B cell (primary cell): ENCODE measurements at regions of chr22 and their contacts with region 1.

Region 1: DNA sequence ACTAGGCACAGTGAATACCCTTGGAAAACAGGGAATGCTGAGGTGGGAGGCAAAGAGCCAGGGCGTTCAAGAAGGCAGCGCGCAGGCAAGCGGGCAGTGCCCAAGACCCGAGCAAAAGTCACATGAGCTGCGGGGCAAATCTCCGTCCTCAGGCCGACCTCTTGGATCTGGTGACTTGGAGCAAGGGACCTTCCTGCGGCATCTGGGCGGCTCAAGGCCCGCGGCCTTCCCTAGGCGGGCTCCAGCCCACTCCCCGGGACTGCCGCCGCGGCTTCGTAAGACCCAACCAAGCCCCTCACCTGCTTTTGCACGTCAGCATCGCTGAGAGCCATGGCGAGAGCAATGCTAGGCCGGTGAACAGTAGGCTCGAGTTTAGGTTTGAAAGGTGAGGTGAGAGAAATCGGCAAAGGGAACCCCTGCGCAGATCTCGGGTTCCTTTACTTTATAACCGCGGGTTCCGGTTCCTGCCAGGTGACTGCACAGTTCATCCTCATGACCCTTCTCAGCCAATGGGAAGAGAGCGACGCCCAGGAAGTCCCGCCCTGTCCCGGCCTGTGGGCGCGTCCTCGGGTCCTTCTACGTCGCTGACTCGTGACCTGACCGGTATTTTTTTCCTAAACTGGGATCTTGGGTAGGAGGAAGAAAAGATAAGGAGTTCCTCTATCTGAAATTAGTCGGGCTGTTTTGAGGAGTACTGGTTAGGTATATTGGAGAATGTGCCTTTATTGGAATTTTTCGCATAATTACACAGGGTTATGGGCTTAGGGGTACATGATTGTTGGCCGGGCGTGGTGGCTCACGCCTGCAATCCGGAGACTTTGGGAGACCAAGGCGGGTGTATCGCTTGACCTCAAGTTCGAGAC is at the start of gene ATP6V1E1:
- DNase-seq: peak; percentile 97
- ATAC-seq: peak; percentile 100
- H3K4me3 ChIP-seq: peak within 1 kb of the TSS; percentile 93 to 98 (median 96)
- H3K4me3 Mint-ChIP-seq: peak within 1 kb of the TSS; percentile 96
- H3K27ac ChIP-seq: peak within 1 kb of the TSS; percentile 86 to 97
- H3K27ac Mint-ChIP-seq: peak within 1 kb of the TSS; percentile 98
- H3K4me1 ChIP-seq: peaks cover 16 to 21% of the 10 kb centered on the region in 2 donors
- H3K4me1 Mint-ChIP-seq: peaks cover 27% of the 10 kb centered on the region
- H3K27me3 ChIP-seq: no peaks in the 10 kb centered on the region
- H3K27me3 Mint-ChIP-seq: no peaks in the 10 kb centered on the region
- CTCF ChIP-seq: no peak
- total RNA-seq, gene ATP6V1E1: 82.6 and 82.9 TPM in 2 replicates

Region 2: DNA sequence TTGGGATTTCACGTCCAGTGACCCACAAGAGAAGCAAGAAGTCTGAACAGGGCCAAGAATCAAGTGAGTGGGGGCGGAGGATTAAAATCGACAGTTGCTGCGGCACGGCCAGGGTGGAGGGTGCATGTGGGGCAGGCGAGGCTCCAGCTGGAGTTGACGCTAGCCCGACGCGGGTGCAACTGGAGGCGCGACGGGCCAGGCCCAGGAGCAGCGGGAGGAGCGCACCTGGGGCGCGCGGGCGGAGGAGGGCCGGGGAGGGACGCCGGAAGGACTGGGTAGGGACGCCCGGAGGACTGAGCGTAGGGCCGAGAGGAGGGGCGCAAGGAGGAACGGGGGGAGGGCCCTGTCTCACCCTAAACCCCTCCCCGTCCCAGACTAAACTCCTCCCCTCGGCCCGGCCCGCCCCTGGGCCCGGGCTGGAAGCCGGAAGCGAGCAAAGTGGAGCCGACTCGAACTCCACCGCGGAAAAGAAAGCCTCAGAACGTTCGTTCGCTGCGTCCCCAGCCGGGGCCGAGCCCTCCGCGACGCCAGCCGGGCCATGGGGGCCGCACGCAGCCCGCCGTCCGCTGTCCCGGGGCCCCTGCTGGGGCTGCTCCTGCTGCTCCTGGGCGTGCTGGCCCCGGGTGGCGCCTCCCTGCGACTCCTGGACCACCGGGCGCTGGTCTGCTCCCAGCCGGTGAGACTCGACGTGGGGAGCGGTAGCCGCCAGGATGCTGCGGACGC is 543.8 kb before region 1 on chr22 and contains the start of gene IL17RA:
- CTCF ChIA-PET with region 1: no interaction called
- POLR2A ChIA-PET with region 1: no interaction called
- intact Hi-C with region 1: loop called (anchors 10 kb)
- DNase-seq: peak; percentile 93
- ATAC-seq: peak; percentile 99
- H3K4me3 ChIP-seq: peak within 1 kb of the TSS; percentile 65 to 97 (median 81)
- H3K4me3 Mint-ChIP-seq: peak within 1 kb of the TSS; percentile 95
- H3K27ac ChIP-seq: peak within 1 kb of the TSS; percentile 26 to 80
- H3K27ac Mint-ChIP-seq: peak within 1 kb of the TSS; percentile 95
- H3K4me1 ChIP-seq: peaks cover 25 to 36% of the 10 kb centered on the region in 2 donors
- H3K4me1 Mint-ChIP-seq: peaks cover 36% of the 10 kb centered on the region
- H3K27me3 ChIP-seq: no peaks in the 10 kb centered on the region
- H3K27me3 Mint-ChIP-seq: no peaks in the 10 kb centered on the region
- CTCF ChIP-seq: no peak
- total RNA-seq, gene IL17RA: 22.4 and 24.6 TPM in 2 replicates

Region 3: DNA sequence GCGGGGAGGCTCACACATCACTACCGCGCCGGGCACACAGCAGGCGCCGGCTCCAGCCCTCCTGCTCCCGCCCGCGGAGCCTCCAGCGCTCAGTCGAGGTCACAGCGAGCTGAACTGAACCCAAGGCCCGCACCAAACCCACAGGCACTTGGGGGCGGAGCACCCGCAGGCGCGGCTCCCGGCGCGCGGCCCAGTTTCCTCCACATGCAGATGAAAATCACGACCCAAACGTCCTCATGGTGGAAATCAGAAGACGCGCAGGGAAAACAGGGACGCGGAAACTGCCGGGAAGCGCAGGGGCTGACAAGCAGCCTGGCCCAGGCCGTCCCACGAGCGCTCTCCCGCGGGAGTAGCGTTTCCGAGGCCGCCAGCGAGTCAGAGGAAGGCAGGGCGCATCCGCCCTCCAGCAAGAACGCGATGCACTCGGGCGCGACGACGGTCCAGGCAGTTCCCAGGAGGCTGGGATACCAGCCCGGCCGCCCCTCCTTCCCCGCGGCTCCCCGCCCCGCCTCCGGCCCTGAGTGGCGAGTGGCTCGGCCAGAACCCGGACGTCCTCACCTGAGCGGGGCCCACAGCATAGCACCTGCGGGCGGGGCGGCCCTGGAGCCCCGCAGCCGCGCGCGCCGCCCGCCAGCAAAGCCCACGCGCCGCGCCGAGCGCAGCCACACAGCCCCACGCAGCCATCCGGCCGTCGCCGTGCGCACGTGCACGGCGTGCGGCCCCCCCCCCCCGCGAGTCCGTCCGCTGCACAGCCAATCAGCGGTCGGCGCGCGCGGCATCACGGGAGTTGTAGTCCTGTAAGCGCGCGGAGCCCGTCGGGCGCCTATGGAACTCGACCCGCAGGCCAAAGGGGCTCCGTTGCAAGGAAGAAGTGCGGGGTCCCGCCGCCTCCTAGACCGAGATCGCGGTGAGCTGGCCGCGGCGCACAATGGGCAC is 469.7 kb before region 1 on chr22 and contains the start of gene HDHD5:
- CTCF ChIA-PET with region 1: no interaction called
- POLR2A ChIA-PET with region 1: no interaction called
- intact Hi-C with region 1: loop called (anchors 2 kb)
- DNase-seq: peak; percentile 93
- ATAC-seq: peak; percentile 92
- H3K4me3 ChIP-seq: peak within 1 kb of the TSS; percentile 30 to 92 (median 84)
- H3K4me3 Mint-ChIP-seq: peak within 1 kb of the TSS; percentile 88
- H3K27ac ChIP-seq: peak within 1 kb of the TSS; percentile 38 to 75
- H3K27ac Mint-ChIP-seq: peak within 1 kb of the TSS; percentile 75
- H3K4me1 ChIP-seq: peaks cover 12 to 21% of the 10 kb centered on the region in 2 donors
- H3K4me1 Mint-ChIP-seq: peaks cover 21% of the 10 kb centered on the region
- H3K27me3 ChIP-seq: no peaks in the 10 kb centered on the region
- H3K27me3 Mint-ChIP-seq: no peaks in the 10 kb centered on the region
- CTCF ChIP-seq: no peak
- total RNA-seq, gene HDHD5: 17.7 and 23.3 TPM in 2 replicates

Region 4: DNA sequence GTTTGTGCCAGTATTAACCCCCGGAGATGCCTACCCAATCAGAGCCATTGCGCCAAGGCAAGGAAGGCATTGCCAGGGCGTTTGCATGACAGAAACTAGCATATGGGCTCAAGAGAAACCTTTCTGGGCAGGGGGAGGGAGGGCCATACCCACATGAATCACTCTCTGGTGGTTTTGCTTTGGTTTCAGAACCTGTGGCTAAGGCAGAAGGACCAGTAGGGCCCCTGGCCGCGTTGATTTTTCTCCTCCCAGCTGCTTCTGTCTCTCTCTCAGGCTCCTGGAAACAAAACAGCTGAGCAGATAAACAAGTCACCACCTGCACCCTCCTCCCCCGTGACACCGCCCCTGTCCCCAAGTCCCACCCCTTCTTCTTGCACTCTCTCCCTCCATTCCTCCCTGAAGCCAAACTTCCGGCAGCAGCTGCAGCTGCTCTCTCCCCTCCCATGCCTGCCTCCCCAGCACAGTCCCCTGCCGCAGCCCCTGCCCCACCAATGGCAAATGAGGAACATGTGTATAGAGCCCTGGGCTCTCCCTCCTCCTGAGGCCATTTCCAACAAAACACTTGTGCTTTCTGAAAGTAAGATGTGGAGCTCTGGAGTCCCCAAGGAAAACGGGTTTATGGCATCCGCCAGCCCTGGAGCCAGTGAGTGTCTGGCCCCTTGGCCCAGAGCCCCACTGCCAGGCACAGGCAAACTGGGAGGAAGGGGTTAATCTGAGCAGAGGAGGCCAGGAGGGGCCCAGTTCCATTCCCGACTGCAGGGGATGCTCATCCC is 370.3 kb before region 1 on chr22:
- CTCF ChIA-PET with region 1: no interaction called
- POLR2A ChIA-PET with region 1: no interaction called
- intact Hi-C with region 1: loop called (anchors 1 kb)
- DNase-seq: peak; percentile 75
- ATAC-seq: peak; percentile 92
- H3K4me3 ChIP-seq: peak overlapping the region in 3 of 5 experiments; percentile 23 to 28 (median 27)
- H3K4me3 Mint-ChIP-seq: peak overlapping the region; percentile 72
- H3K27ac ChIP-seq: peak overlapping the region; percentile 34 to 65
- H3K27ac Mint-ChIP-seq: peak overlapping the region; percentile 95
- H3K4me1 ChIP-seq: peaks cover 17 to 26% of the 10 kb centered on the region in 2 donors
- H3K4me1 Mint-ChIP-seq: peaks cover 29% of the 10 kb centered on the region
- H3K27me3 ChIP-seq: no peaks in the 10 kb centered on the region
- H3K27me3 Mint-ChIP-seq: no peaks in the 10 kb centered on the region
- CTCF ChIP-seq: no peak

Region 5: DNA sequence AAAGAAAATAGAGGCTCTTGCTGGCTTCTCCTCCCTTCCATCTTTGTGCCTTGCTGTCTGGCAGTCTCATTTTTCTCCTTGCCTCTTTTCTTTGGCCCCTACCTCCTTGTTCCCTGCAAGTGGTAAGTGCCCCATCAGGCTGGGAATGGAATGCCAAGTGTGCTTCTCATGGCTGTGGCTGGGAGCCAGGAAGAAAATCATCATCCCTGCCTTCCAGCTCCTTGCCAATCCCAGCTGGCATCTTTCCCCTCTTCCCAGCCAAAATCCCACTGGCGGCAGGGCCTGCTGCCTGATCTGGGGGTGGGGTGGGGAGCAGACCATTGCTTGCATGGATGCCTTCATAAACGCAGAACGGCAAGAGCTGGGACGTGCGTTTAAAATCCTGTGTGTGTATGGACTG is 92.3 kb before region 1 on chr22:
- CTCF ChIA-PET with region 1: no interaction called
- POLR2A ChIA-PET with region 1: no interaction called
- intact Hi-C with region 1: no loop called
- DNase-seq: no peak
- ATAC-seq: no peak
- H3K4me3 ChIP-seq: no peak overlapping the region
- H3K4me3 Mint-ChIP-seq: no peak overlapping the region
- H3K27ac ChIP-seq: no peak overlapping the region
- H3K27ac Mint-ChIP-seq: no peak overlapping the region
- H3K4me1 ChIP-seq: no peaks in the 10 kb centered on the region
- H3K4me1 Mint-ChIP-seq: no peaks in the 10 kb centered on the region
- H3K27me3 ChIP-seq: no peaks in the 10 kb centered on the region
- H3K27me3 Mint-ChIP-seq: peaks cover 9% of the 10 kb centered on the region
- CTCF ChIP-seq: no peak

Region 6: GRCh38 chr22:17552737-17553136 is 75.8 kb before region 1 on chr22:
- CTCF ChIA-PET with region 1: no interaction called
- POLR2A ChIA-PET with region 1: no interaction called
- intact Hi-C with region 1: no loop called
- DNase-seq: no peak
- ATAC-seq: no peak
- H3K4me3 ChIP-seq: no peak overlapping the region
- H3K4me3 Mint-ChIP-seq: no peak overlapping the region
- H3K27ac ChIP-seq: no peak overlapping the region
- H3K27ac Mint-ChIP-seq: no peak overlapping the region
- H3K4me1 ChIP-seq: no peaks in the 10 kb centered on the region
- H3K4me1 Mint-ChIP-seq: no peaks in the 10 kb centered on the region
- H3K27me3 ChIP-seq: no peaks in the 10 kb centered on the region
- H3K27me3 Mint-ChIP-seq: no peaks in the 10 kb centered on the region
- CTCF ChIP-seq: no peak

Region 7: DNA sequence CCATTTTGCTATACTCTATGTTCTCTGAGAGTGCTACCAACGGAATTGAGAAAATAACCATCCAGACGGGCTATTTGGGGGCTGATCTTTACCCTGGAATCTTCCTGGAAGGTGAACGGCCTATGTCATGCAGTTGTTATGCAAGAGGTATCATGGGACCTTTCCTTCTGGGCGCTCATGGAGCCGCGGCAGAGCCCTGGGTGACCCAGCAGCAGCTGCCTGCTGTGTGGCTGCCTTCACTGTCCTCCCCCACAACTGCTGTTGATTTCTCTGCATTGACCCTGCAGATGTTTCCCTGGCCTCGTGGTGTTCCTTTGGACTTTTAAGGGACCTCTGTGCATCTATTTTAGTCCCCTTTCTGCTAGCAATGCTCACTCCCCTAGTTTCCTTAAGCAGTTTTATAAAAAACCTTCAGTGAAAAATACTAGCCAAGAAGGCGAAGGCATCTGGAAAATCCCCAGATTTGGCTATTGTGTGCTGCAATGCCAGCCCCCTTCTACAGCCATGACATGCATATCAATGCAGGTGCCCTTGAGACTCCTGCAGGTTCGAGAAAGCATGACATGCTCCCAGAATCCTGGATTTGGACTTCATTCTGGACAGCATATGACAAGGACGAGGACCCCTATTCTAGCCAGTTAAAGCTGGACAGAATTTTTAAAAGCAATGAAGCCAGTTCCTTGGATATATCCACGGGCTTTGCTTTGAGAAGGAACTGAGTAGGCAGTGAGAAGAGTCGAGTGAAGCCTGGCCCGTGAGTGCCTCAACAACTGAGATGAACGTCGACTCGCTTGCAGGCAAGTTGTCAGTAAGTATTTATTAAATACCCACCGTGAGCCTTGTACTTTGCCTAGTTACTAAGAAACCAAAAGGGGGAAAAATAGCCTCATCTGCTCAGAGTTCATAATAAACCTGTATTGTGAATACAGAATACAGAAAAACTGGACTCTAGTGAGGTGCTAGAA is 65.3 kb before region 1 on chr22 and contains the start of gene SLC25A18:
- CTCF ChIA-PET with region 1: no interaction called
- POLR2A ChIA-PET with region 1: no interaction called
- intact Hi-C with region 1: no loop called
- DNase-seq: no peak
- ATAC-seq: no peak
- H3K4me3 ChIP-seq: no peak within 1 kb of the TSS
- H3K4me3 Mint-ChIP-seq: no peak within 1 kb of the TSS
- H3K27ac ChIP-seq: no peak within 1 kb of the TSS
- H3K27ac Mint-ChIP-seq: no peak within 1 kb of the TSS
- H3K4me1 ChIP-seq: no peaks in the 10 kb centered on the region
- H3K4me1 Mint-ChIP-seq: no peaks in the 10 kb centered on the region
- H3K27me3 ChIP-seq: no peaks in the 10 kb centered on the region
- H3K27me3 Mint-ChIP-seq: peaks cover 14% of the 10 kb centered on the region
- CTCF ChIP-seq: no peak
- total RNA-seq, gene SLC25A18: not detected in 2 replicates

Region 8: DNA sequence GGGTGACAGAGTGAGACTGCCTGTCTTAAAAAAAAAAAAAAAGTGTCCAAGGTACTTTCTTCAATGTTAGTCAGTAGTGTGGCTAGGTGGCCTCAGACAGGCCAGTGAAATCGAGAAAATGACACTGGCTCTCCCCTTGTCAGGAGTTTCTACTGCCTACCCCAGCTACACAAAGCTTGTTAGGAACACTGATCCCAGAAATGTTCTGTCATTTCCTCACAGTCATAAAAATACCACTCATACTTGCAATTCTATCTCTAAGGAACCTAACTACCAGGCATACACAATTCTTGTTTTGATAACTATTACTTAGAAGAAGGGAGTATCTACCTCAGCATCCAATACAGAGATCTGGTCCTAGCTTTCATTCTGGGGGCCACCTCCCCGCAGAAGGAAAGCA is 31.3 kb before region 1 on chr22:
- CTCF ChIA-PET with region 1: no interaction called
- POLR2A ChIA-PET with region 1: interaction called, 6 read pairs
- intact Hi-C with region 1: loop called (anchors 1 kb)
- DNase-seq: no peak
- ATAC-seq: no peak
- H3K4me3 ChIP-seq: no peak overlapping the region
- H3K4me3 Mint-ChIP-seq: no peak overlapping the region
- H3K27ac ChIP-seq: no peak overlapping the region
- H3K27ac Mint-ChIP-seq: no peak overlapping the region
- H3K4me1 ChIP-seq: peaks cover 26 to 27% of the 10 kb centered on the region in 2 donors
- H3K4me1 Mint-ChIP-seq: peaks cover 30% of the 10 kb centered on the region
- H3K27me3 ChIP-seq: no peaks in the 10 kb centered on the region
- H3K27me3 Mint-ChIP-seq: no peaks in the 10 kb centered on the region
- CTCF ChIP-seq: no peak

Region 9: GRCh38 chr22:17612057-17612456 is 16.5 kb before region 1 on chr22:
- CTCF ChIA-PET with region 1: no interaction called
- POLR2A ChIA-PET with region 1: no interaction called
- intact Hi-C with region 1: no loop called
- DNase-seq: no peak
- ATAC-seq: no peak
- H3K4me3 ChIP-seq: no peak overlapping the region
- H3K4me3 Mint-ChIP-seq: no peak overlapping the region
- H3K27ac ChIP-seq: no peak overlapping the region
- H3K27ac Mint-ChIP-seq: no peak overlapping the region
- H3K4me1 ChIP-seq: no peaks in the 10 kb centered on the region
- H3K4me1 Mint-ChIP-seq: peaks cover 1% of the 10 kb centered on the region
- H3K27me3 ChIP-seq: no peaks in the 10 kb centered on the region
- H3K27me3 Mint-ChIP-seq: no peaks in the 10 kb centered on the region
- CTCF ChIP-seq: no peak

Region 10: GRCh38 chr22:17638432-17639246 is 10.1 kb after region 1 on chr22 and contains the start of gene BCL2L13:
- CTCF ChIA-PET with region 1: interaction called, 3 read pairs
- POLR2A ChIA-PET with region 1: interaction called, 3 read pairs
- intact Hi-C with region 1: loop called (anchors 1 kb)
- DNase-seq: peak; percentile 94
- ATAC-seq: peak; percentile 94
- H3K4me3 ChIP-seq: peak within 1 kb of the TSS; percentile 67 to 100 (median 81)
- H3K4me3 Mint-ChIP-seq: peak within 1 kb of the TSS; percentile 96
- H3K27ac ChIP-seq: peak within 1 kb of the TSS; percentile 100
- H3K27ac Mint-ChIP-seq: peak within 1 kb of the TSS; percentile 97
- H3K4me1 ChIP-seq: peaks cover 15 to 20% of the 10 kb centered on the region in 2 donors
- H3K4me1 Mint-ChIP-seq: peaks cover 28% of the 10 kb centered on the region
- H3K27me3 ChIP-seq: no peaks in the 10 kb centered on the region
- H3K27me3 Mint-ChIP-seq: no peaks in the 10 kb centered on the region
- CTCF ChIP-seq: no peak
- total RNA-seq, gene BCL2L13: 29.9 and 37.2 TPM in 2 replicates